ENCODE measurements at regions of chr19 and their contacts with region 1.

Region 1: GRCh38 chr19:57348136-57348535 is 2.9 kb upstream of the ZNF304 start:
- DNase-seq: no peak
- H3K4me3 Mint-ChIP-seq: no peak overlapping the region
- H3K27ac Mint-ChIP-seq: no peak overlapping the region
- H3K4me1 Mint-ChIP-seq: peaks cover 13% of the 10 kb centered on the region
- H3K27me3 Mint-ChIP-seq: no peaks in the 10 kb centered on the region
- CTCF ChIP-seq: no peak

Region 2: GRCh38 chr19:57419439-57419838 is 71.3 kb after region 1 on chr19:
- CTCF ChIA-PET with region 1: interaction called, 12 read pairs
- intact Hi-C with region 1: no loop called
- DNase-seq: no peak
- H3K4me3 Mint-ChIP-seq: no peak overlapping the region
- H3K27ac Mint-ChIP-seq: no peak overlapping the region
- H3K4me1 Mint-ChIP-seq: no peaks in the 10 kb centered on the region
- H3K27me3 Mint-ChIP-seq: no peaks in the 10 kb centered on the region
- CTCF ChIP-seq: no peak